Naive thymus-derived CD8-positive, alpha-beta T cell (primary cell): ENCODE measurements at regions of chr2 and their contacts with region 1.

Region 1: GRCh38 chr2:201182650-201183364 is at the start of gene CASP10:
- DNase-seq: peak in 6 of 10 donors; percentile 6 to 80 (median 50)
- ATAC-seq: peak; percentile 83 to 87
- H3K4me3 Mint-ChIP-seq: peak within 1 kb of the TSS; percentile 94 to 99 (median 98)
- H3K27ac Mint-ChIP-seq: peak within 1 kb of the TSS; percentile 85 to 97 (median 96)
- H3K4me1 Mint-ChIP-seq: peaks cover 15 to 47% (median 37%) of the 10 kb centered on the region in 4 donors
- H3K27me3 Mint-ChIP-seq: no peaks in the 10 kb centered on the region
- polyA plus RNA-seq, gene CASP10: 8.6 to 17.5 (median 14.6) TPM

Region 2: GRCh38 chr2:201194097-201194496 is 11.3 kb after region 1 on chr2:
- POLR2A ChIA-PET with region 1: interaction called, 13 read pairs
- DNase-seq: peak in 3 of 10 donors; percentile 24 to 38 (median 34)
- ATAC-seq: peak; percentile 27 to 61
- H3K4me3 Mint-ChIP-seq: peak overlapping the region; percentile 21 to 81 (median 74)
- H3K27ac Mint-ChIP-seq: peak overlapping the region; percentile 70 to 95 (median 88)
- H3K4me1 Mint-ChIP-seq: peaks cover 28 to 84% (median 70%) of the 10 kb centered on the region in 4 donors
- H3K27me3 Mint-ChIP-seq: no peaks in the 10 kb centered on the region

Region 3: DNA sequence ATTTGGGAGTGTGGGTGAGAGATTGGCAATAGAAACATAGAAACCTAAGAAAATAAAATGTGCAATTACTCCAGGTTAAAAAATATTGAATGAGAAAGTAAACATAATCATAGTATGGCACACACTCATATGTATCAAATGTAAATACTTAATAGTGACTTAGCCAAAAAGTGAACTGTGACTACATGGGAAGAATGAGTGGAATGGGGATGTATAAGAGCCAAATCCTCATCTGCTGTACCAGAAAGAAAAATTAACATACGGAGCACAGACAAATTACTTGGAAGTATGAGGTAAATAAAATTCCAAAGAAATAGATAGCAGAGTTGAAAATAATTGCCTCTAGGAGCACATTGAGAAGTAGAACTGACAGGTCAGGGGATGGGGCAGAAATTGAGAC is 170.3 kb after region 1 on chr2:
- POLR2A ChIA-PET with region 1: no interaction called
- DNase-seq: no peak
- ATAC-seq: no peak
- H3K4me3 Mint-ChIP-seq: no peak overlapping the region
- H3K27ac Mint-ChIP-seq: peak overlapping the region in 3 of 10 donors; percentile 4 to 6 (median 5)
- H3K4me1 Mint-ChIP-seq: no peaks in the 10 kb centered on the region
- H3K27me3 Mint-ChIP-seq: no peaks in the 10 kb centered on the region